A549 (cell line): ENCODE measurements at regions of chr16 and their contacts with region 1.

Region 1: GRCh38 chr16:4957720-4958509 is at the start of gene SEC14L5:
- DNase-seq: peak; percentile 98 to 99
- ATAC-seq: peak; percentile 82 to 92
- H3K4me3 ChIP-seq: peak within 1 kb of the TSS; percentile 49
- H3K27ac ChIP-seq: peak within 1 kb of the TSS; percentile 8 to 54; a peak in 4 of 6 replicates
- H3K4me1 ChIP-seq: peaks cover 4% of the 10 kb centered on the region; the same call in 1 of the 3 replicates
- CTCF ChIP-seq: no peak
- EP300 ChIP-seq: no peak
- POLR2A ChIP-seq: no peak
- RAD21 ChIP-seq: no peak
- polyA plus RNA-seq, gene SEC14L5: 0.05 and 0.07 TPM in 2 replicates

Region 2: DNA sequence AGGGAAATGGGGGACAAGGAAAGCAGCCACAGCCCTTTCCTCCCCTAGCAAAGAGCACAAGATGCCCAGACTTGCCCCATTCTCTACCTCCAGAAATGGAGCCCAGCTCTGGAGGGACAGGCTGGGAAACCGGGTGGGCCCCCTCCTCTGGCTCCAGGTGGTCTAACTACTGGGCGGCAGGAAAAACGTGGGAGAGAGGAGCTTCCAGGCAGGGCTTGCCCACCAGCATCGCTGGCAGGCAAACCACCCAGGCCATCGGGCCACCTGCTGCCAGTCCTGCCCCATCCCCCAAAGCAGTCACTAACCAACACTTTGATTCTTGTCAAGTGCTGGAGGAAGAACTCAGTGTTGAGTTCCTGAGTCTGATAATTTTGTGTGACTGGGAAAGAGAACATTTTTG is 239.4 kb before region 1 on chr16:
- CTCF ChIA-PET with region 1: interaction called, 15 read pairs
- POLR2A ChIA-PET with region 1: no interaction called
- DNase-seq: no peak
- ATAC-seq: no peak
- H3K4me3 ChIP-seq: no peak overlapping the region
- H3K27ac ChIP-seq: no peak overlapping the region
- H3K4me1 ChIP-seq: no peaks in the 10 kb centered on the region
- CTCF ChIP-seq: no peak
- EP300 ChIP-seq: no peak
- POLR2A ChIP-seq: no peak
- RAD21 ChIP-seq: no peak

Region 3: DNA sequence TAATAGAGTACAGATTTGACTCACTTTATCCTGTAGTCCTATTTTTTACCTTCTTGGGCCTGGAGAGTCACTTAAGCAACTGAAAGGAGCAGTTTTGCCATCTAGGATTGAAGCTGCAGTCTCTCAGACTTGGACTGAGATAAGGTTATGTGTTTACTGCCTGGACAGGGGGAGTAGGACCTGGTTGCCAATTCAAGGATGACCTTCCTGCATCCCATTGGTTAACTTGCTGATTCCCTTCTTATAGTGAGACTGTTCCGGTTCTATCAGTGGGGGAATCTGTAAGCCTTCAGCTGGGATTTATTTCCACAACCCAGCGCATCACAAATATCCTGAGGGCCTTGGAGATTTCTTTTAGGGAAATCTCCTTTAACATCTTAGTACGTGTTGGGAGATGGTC is 107.7 kb before region 1 on chr16:
- CTCF ChIA-PET with region 1: interaction called, 11 read pairs
- POLR2A ChIA-PET with region 1: interaction called, 3 read pairs
- DNase-seq: no peak
- ATAC-seq: no peak
- H3K4me3 ChIP-seq: no peak overlapping the region
- H3K27ac ChIP-seq: no peak overlapping the region
- H3K4me1 ChIP-seq: peaks cover 50% of the 10 kb centered on the region
- CTCF ChIP-seq: no peak
- EP300 ChIP-seq: no peak
- POLR2A ChIP-seq: no peak
- RAD21 ChIP-seq: no peak

Region 4: GRCh38 chr16:4936991-4937781 is 20.7 kb before region 1 on chr16 and contains the start of gene PPL:
- CTCF ChIA-PET with region 1: interaction called, 26 read pairs
- POLR2A ChIA-PET with region 1: no interaction called
- DNase-seq: peak in 1 of 2 experiments; percentile 73
- ATAC-seq: peak; percentile 67 to 71
- H3K4me3 ChIP-seq: peak within 1 kb of the TSS; percentile 78
- H3K27ac ChIP-seq: peak within 1 kb of the TSS; percentile 69 to 89
- H3K4me1 ChIP-seq: peaks cover 23% of the 10 kb centered on the region
- CTCF ChIP-seq: no peak
- EP300 ChIP-seq: no peak
- POLR2A ChIP-seq: peak; percentile 6; the same call in 1 of the 2 replicates
- RAD21 ChIP-seq: no peak
- polyA plus RNA-seq, gene PPL: 2.6 and 2.7 TPM in 2 replicates

Region 5: DNA sequence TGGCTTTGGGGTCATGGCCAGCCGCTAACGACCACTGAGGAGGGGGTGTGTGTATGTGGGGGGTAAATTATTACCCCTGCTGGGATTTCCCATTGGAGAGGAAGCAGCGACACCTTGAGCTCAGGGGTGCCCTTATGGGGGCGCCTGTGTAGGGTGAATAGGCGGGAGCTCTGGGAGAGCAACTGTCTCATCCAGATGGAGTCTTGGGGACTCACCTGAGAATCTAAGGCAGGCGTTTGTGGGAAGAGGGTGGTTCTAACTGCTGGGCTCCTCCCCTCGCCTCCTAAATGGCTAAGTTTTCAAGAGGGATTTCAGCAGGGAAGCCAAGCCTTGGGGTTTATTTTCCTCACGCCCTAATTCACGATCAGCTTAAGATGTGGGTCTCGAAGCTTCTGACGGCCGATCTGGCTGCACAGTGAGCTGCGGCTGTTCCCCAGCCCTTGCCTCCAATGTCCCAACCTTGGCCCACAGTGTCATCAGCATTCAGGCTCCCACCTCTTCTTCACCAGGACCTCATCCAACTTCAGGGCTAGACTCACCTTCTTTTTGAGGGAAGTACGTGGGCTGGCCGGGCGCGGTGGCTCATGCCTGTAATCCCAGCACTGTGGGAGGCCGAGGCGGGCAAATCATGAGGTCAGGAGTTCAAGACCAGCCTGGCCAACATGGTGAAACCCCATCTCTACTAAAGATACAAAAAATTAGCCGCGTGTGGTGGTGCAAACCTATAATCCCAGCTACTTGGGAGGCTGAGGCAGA is 276.6 kb after region 1 on chr16:
- CTCF ChIA-PET with region 1: no interaction called
- POLR2A ChIA-PET with region 1: no interaction called
- DNase-seq: no peak
- ATAC-seq: no peak; a peak in 1 of 6 replicates
- H3K4me3 ChIP-seq: no peak overlapping the region
- H3K27ac ChIP-seq: no peak overlapping the region
- H3K4me1 ChIP-seq: no peaks in the 10 kb centered on the region
- CTCF ChIP-seq: no peak
- EP300 ChIP-seq: no peak
- POLR2A ChIP-seq: no peak
- RAD21 ChIP-seq: no peak